Panc1 (cell line): ENCODE measurements at regions of chr1 and their contacts with region 1.

Region 1: DNA sequence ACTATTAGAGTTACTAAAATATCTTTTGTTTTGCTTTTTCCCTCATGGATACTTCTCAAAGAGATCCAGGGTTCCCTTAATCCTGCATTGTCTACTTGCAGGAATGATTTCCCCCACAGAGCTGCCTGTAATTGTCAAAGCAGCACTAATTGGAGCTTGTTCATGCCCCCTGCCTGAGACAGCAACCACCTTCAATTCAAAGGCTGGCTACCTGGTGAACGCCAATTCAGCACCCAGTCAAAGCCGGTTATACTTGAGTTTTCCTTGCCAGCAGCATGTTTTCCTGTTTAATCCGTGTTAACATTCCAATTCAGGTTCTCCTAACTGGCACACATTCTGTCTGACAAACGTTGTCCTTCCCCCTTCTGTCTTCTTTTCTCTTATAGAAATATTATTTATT is 382.9 kb downstream of the NTNG1 start:
- DNase-seq: no peak
- ATAC-seq: no peak
- H3K4me3 ChIP-seq: no peak overlapping the region
- H3K27ac ChIP-seq: no peak overlapping the region
- H3K4me1 ChIP-seq: no peaks in the 10 kb centered on the region
- H3K27me3 ChIP-seq: no peaks in the 10 kb centered on the region
- CTCF ChIP-seq: no peak

Region 2: GRCh38 chr1:107358619-107359327 is 165.0 kb before region 1 on chr1:
- CTCF ChIA-PET with region 1: interaction called, 12 read pairs
- POLR2A ChIA-PET with region 1: no interaction called
- in situ Hi-C with region 1: no loop called
- intact Hi-C with region 1: no loop called
- DNase-seq: no peak
- ATAC-seq: no peak
- H3K4me3 ChIP-seq: no peak overlapping the region
- H3K27ac ChIP-seq: no peak overlapping the region
- H3K4me1 ChIP-seq: no peaks in the 10 kb centered on the region
- H3K27me3 ChIP-seq: no peaks in the 10 kb centered on the region
- CTCF ChIP-seq: no peak